Naive thymus-derived CD4-positive, alpha-beta T cell (primary cell): ENCODE measurements at regions of chr11 and their contacts with region 1.

Region 1: GRCh38 chr11:118889781-118890180 is 6.1 kb downstream of the CXCR5 start:
- DNase-seq: no peak
- ATAC-seq: no peak
- H3K4me3 ChIP-seq: no peak overlapping the region
- H3K4me3 Mint-ChIP-seq: peak overlapping the region in 5 of 10 donors; percentile 8 to 82 (median 59)
- H3K27ac ChIP-seq: no peak overlapping the region
- H3K27ac Mint-ChIP-seq: peak overlapping the region in 6 of 9 donors; percentile 52 to 98 (median 96)
- H3K4me1 ChIP-seq: peaks cover 58 to 71% of the 10 kb centered on the region in 2 donors
- H3K4me1 Mint-ChIP-seq: peaks cover 53 to 92% (median 83%) of the 10 kb centered on the region in 7 donors
- H3K27me3 ChIP-seq: no peaks in the 10 kb centered on the region
- H3K27me3 Mint-ChIP-seq: no peaks in the 10 kb centered on the region

Region 2: DNA sequence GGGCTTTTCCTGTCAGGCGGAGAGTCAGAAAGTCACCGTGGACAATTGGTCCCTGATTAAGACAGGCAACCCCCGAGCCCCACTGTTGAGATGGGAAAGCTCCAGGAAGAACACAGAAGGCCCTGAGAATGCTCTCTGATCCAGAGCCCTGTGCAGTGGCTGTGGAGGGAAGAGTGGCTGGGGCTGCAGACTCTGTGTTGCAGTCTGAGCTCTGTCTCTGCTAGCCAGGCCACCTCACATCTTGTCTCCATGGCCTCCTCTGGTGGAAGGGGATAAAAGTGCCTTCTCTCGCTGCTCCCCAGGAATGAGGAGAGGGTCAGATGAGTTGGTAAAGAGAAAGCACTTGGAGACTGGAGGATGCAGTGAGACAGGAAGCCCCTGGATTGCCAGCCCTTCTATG is 1420.9 kb before region 1 on chr11:
- CTCF ChIA-PET with region 1: no interaction called
- POLR2A ChIA-PET with region 1: no interaction called
- intact Hi-C with region 1: no loop called
- DNase-seq: no peak
- ATAC-seq: no peak
- H3K4me3 ChIP-seq: no peak overlapping the region
- H3K4me3 Mint-ChIP-seq: no peak overlapping the region
- H3K27ac ChIP-seq: no peak overlapping the region
- H3K27ac Mint-ChIP-seq: no peak overlapping the region
- H3K4me1 ChIP-seq: no peaks in the 10 kb centered on the region
- H3K4me1 Mint-ChIP-seq: no peaks in the 10 kb centered on the region
- H3K27me3 ChIP-seq: no peaks in the 10 kb centered on the region
- H3K27me3 Mint-ChIP-seq: peaks cover 0 to 6% (median 0%) of the 10 kb centered on the region in 5 donors

Region 3: GRCh38 chr11:118806400-118806799 is 83.4 kb before region 1 on chr11:
- CTCF ChIA-PET with region 1: no interaction called
- POLR2A ChIA-PET with region 1: no interaction called
- intact Hi-C with region 1: no loop called
- DNase-seq: no peak
- ATAC-seq: no peak
- H3K4me3 ChIP-seq: no peak overlapping the region
- H3K4me3 Mint-ChIP-seq: no peak overlapping the region
- H3K27ac ChIP-seq: no peak overlapping the region
- H3K27ac Mint-ChIP-seq: peak overlapping the region in 3 of 9 donors; percentile 3 to 78 (median 27)
- H3K4me1 ChIP-seq: no peaks in the 10 kb centered on the region
- H3K4me1 Mint-ChIP-seq: peaks cover 0 to 24% (median 17%) of the 10 kb centered on the region in 7 donors
- H3K27me3 ChIP-seq: no peaks in the 10 kb centered on the region
- H3K27me3 Mint-ChIP-seq: peaks cover 0 to 5% (median 0%) of the 10 kb centered on the region in 5 donors

Region 4: DNA sequence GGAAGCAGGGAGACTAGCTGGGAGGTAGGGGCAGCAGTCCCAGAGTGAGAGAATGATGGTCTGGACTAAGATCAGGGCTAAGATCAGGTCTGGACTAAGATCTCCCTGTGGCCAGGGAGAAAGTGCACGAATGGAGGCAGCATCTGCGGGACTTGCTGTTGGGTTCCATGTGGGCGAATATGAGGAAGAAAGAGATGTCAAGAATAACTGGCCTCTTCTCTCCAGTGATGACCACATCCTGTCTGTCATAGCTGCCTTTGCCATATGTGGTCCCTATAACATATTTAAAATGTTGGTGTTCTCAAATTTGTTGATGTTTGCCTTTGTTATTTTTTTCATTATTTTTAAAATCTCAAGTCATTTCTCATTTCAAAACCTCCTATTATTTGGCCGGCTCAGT is 33.5 kb before region 1 on chr11:
- CTCF ChIA-PET with region 1: no interaction called
- POLR2A ChIA-PET with region 1: interaction called, 4 read pairs
- intact Hi-C with region 1: loop called in 1 of 2 experiments (anchors 5 kb)
- DNase-seq: no peak
- ATAC-seq: no peak
- H3K4me3 ChIP-seq: no peak overlapping the region
- H3K4me3 Mint-ChIP-seq: no peak overlapping the region
- H3K27ac ChIP-seq: no peak overlapping the region
- H3K27ac Mint-ChIP-seq: no peak overlapping the region
- H3K4me1 ChIP-seq: no peaks in the 10 kb centered on the region
- H3K4me1 Mint-ChIP-seq: peaks cover 3 to 27% (median 21%) of the 10 kb centered on the region in 7 donors
- H3K27me3 ChIP-seq: no peaks in the 10 kb centered on the region
- H3K27me3 Mint-ChIP-seq: no peaks in the 10 kb centered on the region